ENCODE measurements at regions of chr20 and their contacts with region 1.

Region 1: DNA sequence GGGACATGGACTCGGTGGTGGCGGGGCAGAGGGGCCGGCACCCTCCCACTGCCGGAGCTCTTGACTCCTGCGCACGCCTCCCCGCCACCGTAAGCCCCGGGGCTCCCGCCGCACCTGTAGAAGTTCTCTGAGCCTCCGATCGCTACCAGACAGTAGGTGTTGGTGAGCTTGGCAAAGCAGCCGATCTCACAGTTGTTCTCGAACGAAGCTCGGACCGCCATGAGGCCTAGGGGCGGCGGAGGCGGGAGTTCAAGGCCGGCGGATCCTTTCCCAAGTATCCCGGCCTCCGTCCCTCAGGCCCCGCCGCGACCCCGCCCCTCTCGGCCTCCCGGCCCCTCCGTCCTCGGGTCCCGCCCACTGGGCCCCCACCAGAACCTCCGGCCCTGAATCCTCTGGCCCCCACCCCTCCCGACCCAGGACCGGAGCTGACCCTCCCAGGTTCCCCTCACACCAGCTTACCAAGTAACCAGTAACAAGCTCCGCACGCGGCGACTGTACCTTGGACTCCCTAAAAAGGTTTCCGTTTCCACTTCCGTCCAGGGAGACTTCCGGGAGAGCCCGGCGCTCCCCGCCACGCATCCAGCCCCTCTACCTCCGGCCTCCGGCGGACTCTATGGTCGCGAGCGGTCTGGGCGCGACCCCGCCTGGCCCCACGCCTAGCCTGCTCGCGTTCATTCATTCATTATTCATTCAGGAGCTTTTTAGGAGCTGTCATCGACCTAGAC is at the start of gene EIF6:
- DNase-seq: peak; percentile 83
- ATAC-seq: peak; percentile 92
- H3K4me3 ChIP-seq: peak within 1 kb of the TSS; percentile 59 to 97 (median 93)
- H3K4me3 Mint-ChIP-seq: peak within 1 kb of the TSS; percentile 95
- H3K27ac ChIP-seq: peak within 1 kb of the TSS; percentile 71 to 90
- H3K27ac Mint-ChIP-seq: peak within 1 kb of the TSS; percentile 96
- H3K4me1 ChIP-seq: peaks cover 13 to 19% of the 10 kb centered on the region in 2 donors
- H3K4me1 Mint-ChIP-seq: peaks cover 32% of the 10 kb centered on the region
- H3K27me3 ChIP-seq: no peaks in the 10 kb centered on the region
- H3K27me3 Mint-ChIP-seq: no peaks in the 10 kb centered on the region
- CTCF ChIP-seq: no peak
- total RNA-seq, gene EIF6: 74.0 and 81.2 TPM in 2 replicates

Region 2: DNA sequence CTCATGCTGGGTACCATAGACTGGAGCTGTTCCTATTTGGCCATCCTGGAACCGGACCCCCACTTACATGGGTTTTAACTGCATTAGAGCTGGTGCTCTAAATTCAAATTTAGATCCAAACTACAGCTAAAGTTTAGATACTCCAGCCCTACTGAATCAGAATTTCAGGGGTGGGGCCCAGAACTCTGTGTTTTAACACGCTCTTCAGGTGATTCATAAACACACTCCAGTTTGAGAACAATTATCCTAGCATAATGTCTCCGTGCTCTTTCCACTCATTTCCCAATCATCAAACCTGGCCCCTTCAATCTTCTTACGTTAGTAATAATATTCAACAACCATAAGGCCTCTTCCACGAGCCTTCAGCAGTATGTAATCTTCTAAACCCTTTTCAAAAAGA is 207.1 kb before region 1 on chr20:
- CTCF ChIA-PET with region 1: no interaction called
- POLR2A ChIA-PET with region 1: no interaction called
- intact Hi-C with region 1: no loop called
- DNase-seq: no peak
- ATAC-seq: no peak
- H3K4me3 ChIP-seq: no peak overlapping the region
- H3K4me3 Mint-ChIP-seq: no peak overlapping the region
- H3K27ac ChIP-seq: no peak overlapping the region
- H3K27ac Mint-ChIP-seq: no peak overlapping the region
- H3K4me1 ChIP-seq: no peaks in the 10 kb centered on the region
- H3K4me1 Mint-ChIP-seq: peaks cover 14% of the 10 kb centered on the region
- H3K27me3 ChIP-seq: no peaks in the 10 kb centered on the region
- H3K27me3 Mint-ChIP-seq: no peaks in the 10 kb centered on the region
- CTCF ChIP-seq: no peak

Region 3: DNA sequence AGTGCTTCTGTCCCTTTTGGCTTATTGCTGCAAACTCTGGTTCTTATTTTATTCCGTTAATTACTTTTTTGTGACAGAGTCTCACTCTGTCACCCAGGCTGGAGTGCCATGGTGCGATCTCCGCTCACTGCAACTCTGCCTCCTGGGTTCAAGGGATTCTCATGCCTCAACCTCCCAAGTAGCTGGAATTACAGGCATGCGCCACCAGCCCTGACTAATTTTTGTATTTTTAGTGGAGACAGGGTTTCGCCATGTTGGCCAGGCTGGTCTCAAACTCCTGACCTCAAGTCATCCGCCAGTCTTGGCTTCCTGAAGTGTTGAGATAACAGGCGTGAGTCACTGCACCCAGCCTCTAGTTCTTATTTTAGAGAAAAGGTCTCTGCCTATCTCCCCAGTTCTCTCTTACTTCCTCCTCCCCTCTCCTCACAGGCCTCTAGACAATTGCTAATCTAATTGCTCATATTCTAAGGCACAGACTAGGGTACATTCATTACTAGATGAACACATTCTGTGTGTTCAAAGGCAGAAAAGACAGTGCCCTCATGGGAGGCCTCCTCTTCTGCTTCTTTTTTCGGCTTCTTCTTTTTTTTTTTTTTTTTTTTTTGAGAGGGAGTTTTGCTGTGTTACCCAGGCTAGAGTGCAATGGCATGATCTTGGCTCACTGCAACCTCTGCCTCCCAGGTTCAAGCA is 164.3 kb before region 1 on chr20:
- CTCF ChIA-PET with region 1: no interaction called
- POLR2A ChIA-PET with region 1: no interaction called
- intact Hi-C with region 1: no loop called
- DNase-seq: no peak
- ATAC-seq: no peak
- H3K4me3 ChIP-seq: no peak overlapping the region
- H3K4me3 Mint-ChIP-seq: no peak overlapping the region
- H3K27ac ChIP-seq: no peak overlapping the region
- H3K27ac Mint-ChIP-seq: peak overlapping the region; percentile 46
- H3K4me1 ChIP-seq: no peaks in the 10 kb centered on the region
- H3K4me1 Mint-ChIP-seq: no peaks in the 10 kb centered on the region
- H3K27me3 ChIP-seq: no peaks in the 10 kb centered on the region
- H3K27me3 Mint-ChIP-seq: no peaks in the 10 kb centered on the region
- CTCF ChIP-seq: no peak

Region 4: GRCh38 chr20:35146920-35147574 is 137.4 kb before region 1 on chr20 and contains the start of gene EDEM2:
- CTCF ChIA-PET with region 1: interaction called, 4 read pairs
- POLR2A ChIA-PET with region 1: no interaction called
- intact Hi-C with region 1: loop called (anchors 5 kb)
- DNase-seq: peak; percentile 95
- ATAC-seq: peak; percentile 80
- H3K4me3 ChIP-seq: peak within 1 kb of the TSS; percentile 69 to 94 (median 90)
- H3K4me3 Mint-ChIP-seq: peak within 1 kb of the TSS; percentile 96
- H3K27ac ChIP-seq: peak within 1 kb of the TSS; percentile 79 to 89
- H3K27ac Mint-ChIP-seq: peak within 1 kb of the TSS; percentile 94
- H3K4me1 ChIP-seq: peaks cover 33 to 43% of the 10 kb centered on the region in 2 donors
- H3K4me1 Mint-ChIP-seq: peaks cover 36% of the 10 kb centered on the region
- H3K27me3 ChIP-seq: no peaks in the 10 kb centered on the region
- H3K27me3 Mint-ChIP-seq: no peaks in the 10 kb centered on the region
- CTCF ChIP-seq: no peak
- total RNA-seq, gene EDEM2: 28.1 and 28.6 TPM in 2 replicates